ENCODE measurements at regions of chr1 and their contacts with region 1.

Region 1: DNA sequence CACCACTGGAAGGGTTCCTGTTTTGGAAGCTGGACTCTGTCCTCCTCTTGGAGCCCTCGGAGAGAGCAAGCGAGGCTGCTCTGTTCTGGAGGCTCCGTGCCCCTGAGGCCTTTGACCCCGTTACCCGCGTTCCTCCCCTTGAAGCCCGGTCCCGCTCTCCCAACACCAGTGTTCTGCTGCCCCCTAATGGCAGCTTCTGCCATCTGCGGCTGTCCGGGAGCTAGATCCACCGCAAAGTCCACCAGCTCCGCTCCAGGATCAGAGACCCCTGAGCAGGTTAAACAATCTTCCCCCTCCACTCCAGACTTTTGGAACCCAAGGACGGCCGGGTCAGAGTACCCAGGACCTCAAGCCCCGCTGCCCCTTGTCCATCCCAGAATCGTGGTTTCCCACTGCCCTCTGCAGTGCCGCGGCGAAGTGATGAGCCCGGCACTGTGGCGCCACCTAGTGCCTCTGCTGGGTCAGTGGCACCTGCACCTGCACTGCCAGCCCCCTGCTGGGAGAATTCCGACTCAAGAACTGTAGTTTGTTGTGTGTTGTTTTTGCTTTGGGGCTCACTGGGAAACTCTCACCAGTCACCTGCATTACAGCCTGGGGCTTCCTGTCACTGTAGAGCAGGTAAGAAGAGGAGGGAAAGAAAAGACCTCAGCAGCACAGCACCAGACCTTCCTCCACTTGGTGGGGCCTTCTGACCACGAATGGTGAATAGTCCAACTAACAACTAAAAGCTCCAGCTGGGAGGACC is 63.5 kb upstream of the NFASC start:
- DNase-seq: peak; percentile 89
- H3K4me3 ChIP-seq: peak overlapping the region; percentile 50 to 81
- H3K27ac ChIP-seq: no peak overlapping the region; a peak in 1 of 4 replicates
- H3K4me1 ChIP-seq: peaks cover 0 to 2% of the 10 kb centered on the region in 2 experiments; a peak in 1 of 4 replicates
- H3K27me3 ChIP-seq: 0 out of 2 replicates have a peak, but pooled peaks cover 2% of the 10 kb centered on the region
- CTCF ChIP-seq: peak; percentile 100
- EP300 ChIP-seq: no peak
- RAD21 ChIP-seq: peak; percentile 72

Region 2: GRCh38 chr1:204516180-204516879 is 290.8 kb before region 1 on chr1 and contains the start of gene MDM4:
- CTCF ChIA-PET with region 1: interaction called, 12 read pairs
- POLR2A ChIA-PET with region 1: no interaction called
- DNase-seq: peak; percentile 92
- H3K4me3 ChIP-seq: peak within 1 kb of the TSS; percentile 61 to 73
- H3K27ac ChIP-seq: peak within 1 kb of the TSS; percentile 90
- H3K4me1 ChIP-seq: peaks cover 4 to 8% of the 10 kb centered on the region in 2 experiments; a peak in 1 of 4 replicates
- H3K27me3 ChIP-seq: no peaks in the 10 kb centered on the region
- CTCF ChIP-seq: no peak
- EP300 ChIP-seq: 0 out of 4 replicates have a peak, but pooled peaks of 1 of the 2 experiments have one; percentile 24
- RAD21 ChIP-seq: no peak
- polyA plus RNA-seq, gene MDM4: 6.2 and 9.2 TPM in 2 replicates

Region 3: DNA sequence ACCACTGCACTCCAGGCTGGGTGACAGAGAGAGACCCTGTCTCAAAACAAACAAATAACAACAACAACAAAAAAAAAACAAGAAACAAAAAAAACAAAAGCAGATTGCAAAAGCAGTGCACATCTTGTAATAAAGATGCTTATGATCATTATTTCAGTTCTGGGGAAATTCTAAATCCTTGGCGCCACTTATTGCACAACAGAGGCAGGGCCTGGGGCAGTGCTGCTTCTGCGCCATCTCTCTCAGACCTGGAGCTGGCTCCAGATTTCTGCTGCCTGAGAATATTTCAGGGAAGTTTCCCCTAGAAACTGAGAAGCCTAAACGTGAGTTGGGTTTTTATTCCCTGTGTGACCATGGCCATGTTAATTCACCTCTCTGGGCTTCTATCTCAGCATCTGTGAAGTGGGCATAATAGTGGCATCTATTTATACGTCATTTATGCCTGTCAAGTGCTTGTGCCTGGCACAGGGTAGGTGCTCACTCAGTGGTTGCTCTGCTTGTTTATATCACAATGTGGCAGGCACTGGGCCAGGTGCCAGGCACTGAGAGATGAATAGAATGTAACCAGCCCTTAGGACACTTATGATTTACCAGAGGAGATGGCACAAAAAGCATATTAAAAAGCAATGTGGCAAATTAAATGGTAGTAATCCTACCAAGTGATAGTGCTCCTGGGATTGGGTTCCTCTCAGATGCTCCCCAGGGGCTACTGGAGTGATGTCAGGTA is 223.0 kb before region 1 on chr1:
- CTCF ChIA-PET with region 1: interaction called, 568 read pairs
- POLR2A ChIA-PET with region 1: no interaction called
- DNase-seq: peak; percentile 75
- H3K4me3 ChIP-seq: no peak overlapping the region
- H3K27ac ChIP-seq: peak overlapping the region in 1 of 2 experiments; percentile 29; a peak in 1 of 4 replicates
- H3K4me1 ChIP-seq: peaks cover 0 to 15% of the 10 kb centered on the region in 2 experiments; a peak in 1 of 4 replicates
- H3K27me3 ChIP-seq: no peaks in the 10 kb centered on the region
- CTCF ChIP-seq: no peak
- EP300 ChIP-seq: peak in 1 of 2 experiments; percentile 91; a peak in 2 of 4 replicates
- RAD21 ChIP-seq: no peak

Region 4: GRCh38 chr1:204673909-204674649 is 133.0 kb before region 1 on chr1:
- CTCF ChIA-PET with region 1: interaction called, 15 read pairs
- POLR2A ChIA-PET with region 1: no interaction called
- DNase-seq: peak; percentile 41
- H3K4me3 ChIP-seq: no peak overlapping the region
- H3K27ac ChIP-seq: no peak overlapping the region
- H3K4me1 ChIP-seq: peaks cover 0 to 7% of the 10 kb centered on the region in 2 experiments; a peak in 1 of 4 replicates
- H3K27me3 ChIP-seq: peaks cover 24% of the 10 kb centered on the region; the same call in 1 of the 2 replicates
- CTCF ChIP-seq: no peak
- EP300 ChIP-seq: no peak
- RAD21 ChIP-seq: no peak

Region 5: GRCh38 chr1:204782118-204782700 is 24.9 kb before region 1 on chr1:
- CTCF ChIA-PET with region 1: interaction called, 29 read pairs
- POLR2A ChIA-PET with region 1: no interaction called
- DNase-seq: no peak
- H3K4me3 ChIP-seq: no peak overlapping the region
- H3K27ac ChIP-seq: no peak overlapping the region
- H3K4me1 ChIP-seq: no peaks in the 10 kb centered on the region
- H3K27me3 ChIP-seq: 0 out of 2 replicates have a peak, but pooled peaks cover 7% of the 10 kb centered on the region
- CTCF ChIP-seq: no peak
- EP300 ChIP-seq: no peak
- RAD21 ChIP-seq: no peak

Region 6: DNA sequence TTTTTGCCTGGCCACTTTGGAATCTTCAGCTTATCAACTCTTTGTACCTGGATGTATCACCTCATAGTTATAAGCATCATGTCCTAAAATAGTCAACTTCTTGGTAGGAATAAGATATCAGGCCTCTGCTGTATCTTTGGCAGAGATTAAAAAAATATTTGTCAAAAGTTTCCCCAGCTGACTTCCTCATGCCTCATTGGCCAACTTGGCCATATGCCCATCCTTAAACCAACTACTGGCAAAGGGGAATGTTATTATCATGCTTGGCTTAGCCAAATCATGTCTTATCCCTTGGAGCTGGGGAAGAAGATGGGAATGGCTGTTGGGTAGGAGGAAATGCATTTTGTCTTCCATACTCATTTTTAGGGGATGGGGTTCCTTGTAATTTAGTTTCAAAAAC is 86.9 kb after region 1 on chr1:
- CTCF ChIA-PET with region 1: interaction called, 46 read pairs
- POLR2A ChIA-PET with region 1: no interaction called
- DNase-seq: no peak
- H3K4me3 ChIP-seq: no peak overlapping the region
- H3K27ac ChIP-seq: no peak overlapping the region
- H3K4me1 ChIP-seq: peaks cover 0 to 11% of the 10 kb centered on the region in 2 experiments; a peak in 2 of 4 replicates
- H3K27me3 ChIP-seq: no peaks in the 10 kb centered on the region; the same call in 1 of the 2 replicates
- CTCF ChIP-seq: no peak
- EP300 ChIP-seq: no peak
- RAD21 ChIP-seq: no peak

Region 7: DNA sequence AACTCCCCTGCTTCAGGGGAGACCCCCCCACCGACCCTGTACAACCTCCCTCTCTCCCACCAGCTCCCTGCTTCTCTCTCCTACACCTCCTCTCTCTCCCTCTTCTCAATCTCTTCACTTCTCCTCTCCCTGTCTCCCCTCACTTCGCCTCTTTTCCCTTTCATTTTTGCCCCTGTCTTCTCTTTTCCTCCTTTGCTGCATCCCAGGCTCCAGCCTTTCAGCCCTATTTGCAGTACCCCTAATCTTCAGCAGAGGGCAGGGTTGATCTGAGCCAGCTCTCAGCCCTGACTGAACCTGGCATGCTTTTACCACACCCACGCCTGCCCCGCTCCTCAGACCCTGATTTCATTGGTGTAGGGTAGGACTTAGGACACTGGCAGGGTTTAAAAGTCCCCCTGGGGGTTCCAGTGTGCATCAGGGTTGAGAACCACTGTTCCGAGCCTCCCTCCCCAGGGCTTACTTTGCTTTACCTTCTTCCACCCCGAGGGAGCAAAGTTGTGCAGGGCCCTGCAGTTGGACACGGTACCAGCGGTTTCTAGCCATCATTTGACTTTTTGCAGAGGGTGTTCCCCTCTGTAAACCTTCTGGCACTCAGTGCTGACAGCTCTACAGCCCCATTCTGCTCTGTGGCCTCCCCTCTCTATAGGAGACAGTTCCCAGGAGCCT is 168.6 kb after region 1 on chr1:
- CTCF ChIA-PET with region 1: interaction called, 59 read pairs
- POLR2A ChIA-PET with region 1: no interaction called
- DNase-seq: peak; percentile 88
- H3K4me3 ChIP-seq: no peak overlapping the region; a peak in 1 of 4 replicates
- H3K27ac ChIP-seq: no peak overlapping the region
- H3K4me1 ChIP-seq: peaks cover 0 to 11% of the 10 kb centered on the region in 2 experiments; a peak in 2 of 4 replicates
- H3K27me3 ChIP-seq: no peaks in the 10 kb centered on the region
- CTCF ChIP-seq: peak; percentile 77
- EP300 ChIP-seq: no peak
- RAD21 ChIP-seq: peak; percentile 79

Region 8: DNA sequence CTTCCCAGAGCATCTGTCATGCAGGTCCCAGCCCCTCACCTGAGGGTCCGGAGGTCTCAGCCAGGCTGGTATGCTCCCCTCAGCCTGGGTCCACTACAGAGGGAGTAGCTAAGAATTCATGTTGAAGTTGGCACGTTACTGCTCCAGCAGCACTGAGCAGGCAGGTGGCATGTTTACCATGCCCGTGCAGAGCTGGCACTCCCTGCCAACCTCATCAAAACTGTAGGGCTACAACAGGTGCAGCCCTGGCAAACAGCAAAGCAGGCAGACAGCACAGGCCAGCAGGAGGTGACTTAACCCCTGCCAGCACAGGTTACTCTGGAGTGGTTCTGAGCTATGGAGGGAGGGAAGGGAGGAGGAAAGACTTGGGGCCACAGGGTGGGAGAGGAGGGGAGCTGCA is 468.0 kb after region 1 on chr1:
- CTCF ChIA-PET with region 1: no interaction called
- POLR2A ChIA-PET with region 1: no interaction called
- DNase-seq: no peak
- H3K4me3 ChIP-seq: no peak overlapping the region
- H3K27ac ChIP-seq: no peak overlapping the region
- H3K4me1 ChIP-seq: peaks cover 3 to 10% of the 10 kb centered on the region in 2 experiments; a peak in 3 of 4 replicates
- H3K27me3 ChIP-seq: no peaks in the 10 kb centered on the region
- CTCF ChIP-seq: no peak
- EP300 ChIP-seq: no peak
- RAD21 ChIP-seq: no peak

Measured in SK-N-SH (cell line).